Activated CD8-positive, alpha-beta memory T cell treated with anti-CD3 and anti-CD28 coated beads, Interleukin-2, amount 10 ng/mL, durations not matched to agents 7 days and 5 days (primary cell): ENCODE measurements at regions of chr9 and their contacts with region 1.

Region 1: GRCh38 chr9:6739218-6739617 is 18.6 kb upstream of the KDM4C start:
- DNase-seq: no peak
- ATAC-seq: no peak
- H3K4me3 Mint-ChIP-seq: no peak overlapping the region
- H3K27ac Mint-ChIP-seq: no peak overlapping the region
- H3K4me1 Mint-ChIP-seq: no peaks in the 10 kb centered on the region
- H3K27me3 Mint-ChIP-seq: no peaks in the 10 kb centered on the region

Region 2: GRCh38 chr9:6584881-6585597 is 154.2 kb before region 1 on chr9:
- CTCF ChIA-PET with region 1: interaction called, 10 read pairs
- DNase-seq: no peak
- ATAC-seq: peak; percentile 51
- H3K4me3 Mint-ChIP-seq: no peak overlapping the region
- H3K27ac Mint-ChIP-seq: no peak overlapping the region
- H3K4me1 Mint-ChIP-seq: no peaks in the 10 kb centered on the region
- H3K27me3 Mint-ChIP-seq: peaks cover 1% of the 10 kb centered on the region